Activated CD4-positive, alpha-beta T cell treated with anti-CD3 and anti-CD28 coated beads for 36 hours (primary cell): ENCODE measurements at regions of chr10 and their contacts with region 1.

Region 1: GRCh38 chr10:16777473-16778370 is 39.5 kb downstream of the RSU1 start:
- DNase-seq: no peak
- ATAC-seq: no peak
- H3K4me3 Mint-ChIP-seq: no peak overlapping the region
- H3K27ac Mint-ChIP-seq: peak overlapping the region; percentile 76
- H3K4me1 Mint-ChIP-seq: peaks cover 33% of the 10 kb centered on the region
- H3K27me3 Mint-ChIP-seq: no peaks in the 10 kb centered on the region

Region 2: GRCh38 chr10:15879058-15879457 is 898.7 kb before region 1 on chr10:
- CTCF ChIA-PET with region 1: no interaction called
- POLR2A ChIA-PET with region 1: no interaction called
- intact Hi-C with region 1: loop called (anchors 1 to 10 kb)
- DNase-seq: no peak
- ATAC-seq: no peak
- H3K4me3 Mint-ChIP-seq: no peak overlapping the region
- H3K27ac Mint-ChIP-seq: no peak overlapping the region
- H3K4me1 Mint-ChIP-seq: no peaks in the 10 kb centered on the region
- H3K27me3 Mint-ChIP-seq: peaks cover 28% of the 10 kb centered on the region

Region 3: GRCh38 chr10:16116404-16117304 is 661.1 kb before region 1 on chr10:
- CTCF ChIA-PET with region 1: no interaction called
- POLR2A ChIA-PET with region 1: no interaction called
- intact Hi-C with region 1: loop called (anchors 2 kb)
- DNase-seq: peak; percentile 16
- ATAC-seq: no peak
- H3K4me3 Mint-ChIP-seq: no peak overlapping the region
- H3K27ac Mint-ChIP-seq: no peak overlapping the region
- H3K4me1 Mint-ChIP-seq: no peaks in the 10 kb centered on the region
- H3K27me3 Mint-ChIP-seq: peaks cover 6% of the 10 kb centered on the region

Region 4: DNA sequence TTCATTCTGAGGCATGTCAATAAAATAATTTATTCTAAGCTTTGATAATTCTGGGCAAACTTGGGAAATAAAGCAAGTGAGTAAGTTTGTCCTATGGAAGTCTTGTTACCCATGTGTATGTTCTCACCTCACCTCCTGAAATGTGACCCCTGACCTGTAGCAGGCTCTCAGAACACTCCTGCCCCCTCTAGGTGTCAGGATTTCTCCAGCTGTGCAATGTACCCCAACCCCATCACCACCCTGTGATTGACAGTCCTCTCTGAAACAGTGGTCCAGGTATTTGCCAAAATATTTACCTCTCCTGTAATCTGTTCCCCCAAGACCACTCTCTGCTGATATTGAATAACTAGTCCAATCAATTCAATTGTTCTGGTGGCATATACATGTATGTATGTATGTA is 463.5 kb before region 1 on chr10:
- CTCF ChIA-PET with region 1: no interaction called
- POLR2A ChIA-PET with region 1: no interaction called
- intact Hi-C with region 1: loop called in 1 of 2 experiments (anchors 5 kb)
- DNase-seq: peak; percentile 7
- ATAC-seq: no peak
- H3K4me3 Mint-ChIP-seq: no peak overlapping the region
- H3K27ac Mint-ChIP-seq: no peak overlapping the region
- H3K4me1 Mint-ChIP-seq: no peaks in the 10 kb centered on the region
- H3K27me3 Mint-ChIP-seq: no peaks in the 10 kb centered on the region

Region 5: DNA sequence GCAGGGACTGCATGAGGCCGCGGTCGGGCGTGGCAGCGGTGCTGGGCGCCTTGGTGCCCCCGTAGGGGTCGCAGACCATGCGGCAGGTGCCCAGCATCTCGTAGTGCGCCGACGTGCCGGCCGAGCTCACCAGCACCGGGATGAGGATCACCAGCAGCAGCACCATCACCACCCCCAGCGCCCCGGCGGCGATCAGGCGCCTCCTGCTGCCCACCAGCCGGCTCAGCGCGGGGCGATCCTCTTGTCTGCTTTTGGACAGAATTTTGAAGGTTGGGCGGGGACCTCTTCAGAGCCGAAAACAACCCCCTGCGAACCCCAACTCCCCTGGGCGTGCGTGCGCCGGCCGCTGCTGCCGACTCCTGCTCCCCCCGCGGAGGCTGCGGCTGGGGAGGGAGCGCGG is 256.8 kb before region 1 on chr10:
- CTCF ChIA-PET with region 1: no interaction called
- POLR2A ChIA-PET with region 1: no interaction called
- intact Hi-C with region 1: loop called (anchors 2 to 5 kb)
- DNase-seq: peak; percentile 69
- ATAC-seq: peak; percentile 69
- H3K4me3 Mint-ChIP-seq: peak overlapping the region; percentile 44
- H3K27ac Mint-ChIP-seq: no peak overlapping the region
- H3K4me1 Mint-ChIP-seq: peaks cover 9% of the 10 kb centered on the region
- H3K27me3 Mint-ChIP-seq: peaks cover 30% of the 10 kb centered on the region

Region 6: DNA sequence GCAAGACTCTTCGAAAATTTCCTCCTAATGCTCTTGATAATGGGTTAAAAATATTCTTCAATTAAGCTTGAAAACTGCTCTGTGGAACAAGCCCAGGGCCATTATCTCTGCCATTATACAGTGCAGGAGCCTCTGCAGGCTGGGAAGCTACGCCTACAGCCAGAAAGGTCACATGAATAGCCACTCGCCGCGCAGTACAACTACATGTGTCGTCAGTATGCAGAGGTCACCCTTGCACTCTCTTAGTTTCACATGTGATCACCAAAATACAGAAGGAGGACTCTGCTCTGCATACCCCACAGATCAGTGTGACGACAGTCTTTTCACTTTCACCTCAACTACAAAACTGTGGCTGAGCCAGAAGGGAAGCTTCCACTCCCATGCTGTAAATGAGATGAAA is 114.3 kb before region 1 on chr10:
- CTCF ChIA-PET with region 1: no interaction called
- POLR2A ChIA-PET with region 1: no interaction called
- intact Hi-C with region 1: loop called in 1 of 2 experiments (anchors 1 kb)
- DNase-seq: no peak
- ATAC-seq: no peak
- H3K4me3 Mint-ChIP-seq: no peak overlapping the region
- H3K27ac Mint-ChIP-seq: no peak overlapping the region
- H3K4me1 Mint-ChIP-seq: peaks cover 19% of the 10 kb centered on the region
- H3K27me3 Mint-ChIP-seq: no peaks in the 10 kb centered on the region

Region 7: GRCh38 chr10:16817125-16818019 is 39.6 kb after region 1 on chr10 and contains the start of gene RSU1:
- CTCF ChIA-PET with region 1: interaction called, 5 read pairs
- POLR2A ChIA-PET with region 1: no interaction called
- intact Hi-C with region 1: loop called (anchors 1 kb)
- DNase-seq: peak; percentile 100
- ATAC-seq: peak; percentile 99
- H3K4me3 Mint-ChIP-seq: peak within 1 kb of the TSS; percentile 87
- H3K27ac Mint-ChIP-seq: peak within 1 kb of the TSS; percentile 95
- H3K4me1 Mint-ChIP-seq: peaks cover 27% of the 10 kb centered on the region
- H3K27me3 Mint-ChIP-seq: no peaks in the 10 kb centered on the region
- total RNA-seq, gene RSU1: 38.4 to 62.8 TPM